Activated naive CD4-positive, alpha-beta T cell treated with anti-CD3 and anti-CD28 coated beads, Interleukin-2, amount 10 ng/mL, durations not matched to agents 7 days and 5 days (primary cell): ENCODE measurements at regions of chr4 and their contacts with region 1.

Region 1: GRCh38 chr4:77433418-77433733 is 172.2 kb upstream of the CXCL13 start:
- DNase-seq: peak; percentile 29
- H3K4me3 Mint-ChIP-seq: no peak overlapping the region
- H3K27ac Mint-ChIP-seq: no peak overlapping the region
- H3K4me1 Mint-ChIP-seq: peaks cover 3% of the 10 kb centered on the region
- H3K27me3 Mint-ChIP-seq: no peaks in the 10 kb centered on the region

Region 2: GRCh38 chr4:77385124-77385969 is 48.0 kb before region 1 on chr4:
- CTCF ChIA-PET with region 1: interaction called, 22 read pairs
- DNase-seq: peak; percentile 65
- H3K4me3 Mint-ChIP-seq: no peak overlapping the region
- H3K27ac Mint-ChIP-seq: no peak overlapping the region
- H3K4me1 Mint-ChIP-seq: peaks cover 5% of the 10 kb centered on the region
- H3K27me3 Mint-ChIP-seq: peaks cover 16% of the 10 kb centered on the region

Region 3: DNA sequence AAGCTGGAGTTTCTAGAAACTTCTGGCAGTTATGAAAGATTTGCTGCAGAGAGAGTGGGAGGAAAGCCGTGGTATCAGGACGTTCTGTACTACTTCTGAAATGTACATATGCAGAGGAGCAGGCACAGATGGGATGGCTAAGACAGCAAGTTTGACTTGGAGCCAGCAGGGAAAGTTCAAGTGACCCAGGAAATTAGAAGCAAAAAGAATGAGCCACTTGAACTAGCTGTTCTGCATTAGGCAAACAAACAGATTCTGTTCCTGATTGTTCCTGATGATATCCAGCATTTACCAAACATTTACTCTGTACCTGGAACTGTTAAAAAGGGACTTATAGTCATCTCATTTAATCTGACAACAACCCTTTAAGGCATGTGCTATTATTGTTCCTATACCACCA is 130.9 kb after region 1 on chr4:
- CTCF ChIA-PET with region 1: no interaction called
- DNase-seq: no peak
- H3K4me3 Mint-ChIP-seq: no peak overlapping the region
- H3K27ac Mint-ChIP-seq: no peak overlapping the region
- H3K4me1 Mint-ChIP-seq: no peaks in the 10 kb centered on the region
- H3K27me3 Mint-ChIP-seq: peaks cover 3% of the 10 kb centered on the region